Right ventricle myocardium superior (tissue), 1 donor: ENCODE measurements at regions of chr12 and their contacts with region 1.

Region 1: GRCh38 chr12:10749700-10750384 is 26.7 kb upstream of the YBX3 start:
- DNase-seq: peak; percentile 59
- ATAC-seq: peak; percentile 97

Region 2: DNA sequence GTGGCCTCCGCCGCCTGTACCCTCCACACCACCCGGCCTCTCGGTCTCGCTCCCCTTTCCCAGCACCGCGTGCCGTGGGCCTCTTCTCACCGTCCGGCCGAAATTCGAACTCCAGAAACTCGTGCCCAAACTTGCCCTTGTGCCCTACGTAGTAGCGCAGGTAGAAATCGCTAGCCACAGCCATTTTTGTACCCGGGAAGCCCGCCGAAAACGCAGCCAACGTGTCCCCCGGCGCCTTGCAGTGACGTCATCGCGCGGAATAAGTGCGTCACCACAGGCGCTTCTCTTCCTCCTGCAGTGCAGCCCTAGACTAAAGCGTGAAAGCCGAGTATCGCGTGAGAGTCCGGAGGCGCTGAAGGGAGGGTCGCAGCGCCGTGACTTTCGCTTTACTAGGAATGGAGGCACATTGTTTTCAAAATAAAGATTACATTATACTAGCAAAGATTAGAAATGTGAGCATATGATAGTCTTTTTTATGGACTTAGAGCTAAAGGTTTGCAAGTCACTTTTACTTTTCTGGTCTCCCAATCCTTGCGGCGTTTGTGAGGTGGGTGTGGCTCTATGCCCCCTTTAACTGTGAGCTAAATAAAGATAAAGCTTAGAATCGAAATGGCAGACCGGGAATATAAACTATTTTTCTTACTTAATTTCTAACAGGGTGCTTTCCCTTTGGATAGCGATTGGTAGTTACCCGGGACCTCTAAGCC is 136.3 kb before region 1 on chr12 and contains the start of gene MAGOHB:
- intact Hi-C with region 1: loop called (anchors 5 kb)
- DNase-seq: peak; percentile 97
- ATAC-seq: peak; percentile 100
- total RNA-seq, gene MAGOHB: 14.0 TPM

Region 3: GRCh38 chr12:10690906-10691305 is 58.9 kb before region 1 on chr12:
- intact Hi-C with region 1: loop called (anchors 10 kb)
- DNase-seq: no peak
- ATAC-seq: no peak

Region 4: DNA sequence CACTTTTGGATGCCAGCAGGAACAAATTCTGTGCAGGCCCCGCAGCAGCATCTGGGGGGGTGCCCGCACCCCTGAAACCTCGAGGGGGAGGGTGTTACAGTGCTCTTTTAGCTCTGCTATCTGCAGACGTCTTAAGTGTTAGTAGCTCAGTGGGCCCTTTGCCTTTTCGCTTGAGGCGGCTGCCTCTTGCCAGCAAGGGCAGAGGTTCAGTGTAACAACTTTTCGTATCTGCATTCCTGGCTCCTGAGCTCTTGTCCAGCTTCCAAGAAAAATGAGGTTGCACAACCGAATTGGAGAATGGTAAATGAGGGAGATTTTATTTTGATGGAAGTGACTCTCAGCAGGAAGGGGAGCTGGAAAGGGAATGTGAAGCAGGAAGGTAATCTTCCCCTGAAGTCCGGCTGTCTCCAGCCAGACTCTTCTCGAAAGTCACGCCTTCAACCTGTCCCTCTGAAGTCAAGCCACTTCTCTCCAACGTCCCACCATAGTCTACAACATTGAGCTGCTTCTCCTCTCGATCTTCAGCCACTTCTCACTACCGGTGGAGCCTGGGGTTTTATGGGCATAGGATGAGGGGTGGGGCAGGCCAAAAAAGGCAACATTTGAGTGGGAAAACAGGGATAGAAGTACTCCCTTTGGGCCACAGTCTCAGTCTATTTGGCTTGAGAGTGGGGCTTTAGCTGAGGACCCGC is 219.1 kb after region 1 on chr12:
- intact Hi-C with region 1: no loop called
- DNase-seq: peak; percentile 45
- ATAC-seq: peak; percentile 94